Mammary epithelial cell (primary cell): ENCODE measurements at regions of chr1 and their contacts with region 1.

Region 1: GRCh38 chr1:11790880-11791715 is 14.7 kb downstream of the MTHFR start:
- DNase-seq: peak; percentile 67
- H3K4me3 ChIP-seq: no peak overlapping the region
- H3K27ac ChIP-seq: no peak overlapping the region
- H3K4me1 ChIP-seq: peaks cover 10% of the 10 kb centered on the region
- H3K27me3 ChIP-seq: no peaks in the 10 kb centered on the region
- CTCF ChIP-seq: no peak

Region 2: GRCh38 chr1:11671544-11672286 is 119.4 kb before region 1 on chr1:
- CTCF ChIA-PET with region 1: no interaction called
- dilution Hi-C with region 1: loop called (anchors 10 kb)
- in situ Hi-C with region 1: no loop called
- intact Hi-C with region 1: no loop called
- DNase-seq: no peak
- H3K4me3 ChIP-seq: no peak overlapping the region
- H3K27ac ChIP-seq: no peak overlapping the region
- H3K4me1 ChIP-seq: no peaks in the 10 kb centered on the region
- H3K27me3 ChIP-seq: no peaks in the 10 kb centered on the region
- CTCF ChIP-seq: no peak

Region 3: GRCh38 chr1:11708554-11709350 is 82.3 kb before region 1 on chr1:
- CTCF ChIA-PET with region 1: interaction called, 11 read pairs
- dilution Hi-C with region 1: loop called (anchors 5 kb)
- in situ Hi-C with region 1: no loop called
- intact Hi-C with region 1: no loop called
- DNase-seq: no peak
- H3K4me3 ChIP-seq: no peak overlapping the region
- H3K27ac ChIP-seq: no peak overlapping the region
- H3K4me1 ChIP-seq: no peaks in the 10 kb centered on the region
- H3K27me3 ChIP-seq: peaks cover 6% of the 10 kb centered on the region
- CTCF ChIP-seq: no peak

Region 4: DNA sequence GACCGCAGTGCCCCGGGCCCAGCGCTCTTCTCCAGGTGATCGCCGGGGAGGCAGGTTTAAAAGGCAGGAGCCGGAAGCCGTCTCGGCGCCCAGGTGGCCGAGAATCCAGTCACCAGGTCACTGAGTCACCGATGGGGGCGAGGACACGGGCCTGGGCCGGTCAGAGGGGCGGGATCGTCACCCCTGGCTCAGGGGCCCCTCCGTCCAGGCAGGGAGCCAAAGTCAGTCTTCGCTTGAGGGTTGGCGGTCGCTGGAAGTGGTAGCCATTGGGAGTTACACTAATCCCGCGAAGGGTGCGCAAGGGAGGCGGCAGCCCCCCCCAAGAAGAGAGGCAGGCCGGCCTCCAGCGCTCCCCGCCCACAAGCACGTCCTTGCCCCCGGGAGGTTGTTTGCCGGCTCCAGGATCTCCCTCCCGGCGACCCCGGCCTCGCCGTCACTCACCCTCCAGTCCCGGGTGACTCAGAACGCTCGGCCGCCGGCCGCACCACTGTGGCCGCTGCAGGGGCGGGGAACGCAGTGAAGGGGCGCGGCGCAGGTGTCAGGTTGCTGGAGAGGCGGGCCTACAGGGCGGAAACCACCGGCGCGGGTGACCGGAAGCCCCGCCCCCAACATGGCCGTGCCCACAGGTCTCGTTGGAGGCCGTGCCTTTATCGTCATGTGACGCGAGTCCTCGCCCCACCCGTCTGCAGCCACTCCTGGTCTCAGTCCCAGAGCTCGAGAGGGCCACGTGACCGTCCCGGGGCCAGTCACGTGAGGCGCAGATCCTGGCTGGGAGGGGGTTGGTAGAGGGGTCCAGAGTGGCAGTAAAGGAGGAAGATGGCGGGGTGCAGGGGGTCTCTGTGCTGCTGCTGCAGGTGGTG is 14.6 kb after region 1 on chr1 and contains the starts of genes CLCN6 and MTHFR:
- CTCF ChIA-PET with region 1: no interaction called
- dilution Hi-C with region 1: no loop called
- in situ Hi-C with region 1: no loop called
- intact Hi-C with region 1: loop called (anchors 2 kb)
- DNase-seq: peak; percentile 99
- H3K4me3 ChIP-seq: peak within 1 kb of the TSS; percentile 50 to 87 (median 71)
- H3K27ac ChIP-seq: peak within 1 kb of the TSS; percentile 90
- H3K4me1 ChIP-seq: peaks cover 50% of the 10 kb centered on the region
- H3K27me3 ChIP-seq: no peaks in the 10 kb centered on the region
- CTCF ChIP-seq: no peak
- total RNA-seq, gene CLCN6: 7.0 to 17.0 TPM
- total RNA-seq, gene MTHFR: 19.1 to 19.2 TPM